Activated CD8-positive, alpha-beta T cell treated with anti-CD3 and anti-CD28 coated beads, Interleukin-2, amount 10 ng/mL, durations not matched to agents 7 days and 5 days (primary cell): ENCODE measurements at regions of chr2 and their contacts with region 1.

Region 1: GRCh38 chr2:63588385-63589147 is at the starts of genes MDH1 and WDPCP:
- DNase-seq: peak; percentile 96
- ATAC-seq: peak; percentile 91
- H3K4me3 Mint-ChIP-seq: peak within 1 kb of the TSS; percentile 98
- H3K27ac Mint-ChIP-seq: peak within 1 kb of the TSS; percentile 93
- H3K4me1 Mint-ChIP-seq: peaks cover 40% of the 10 kb centered on the region
- H3K27me3 Mint-ChIP-seq: no peaks in the 10 kb centered on the region
- total RNA-seq, gene MDH1: 179 to 197 TPM
- total RNA-seq, gene WDPCP: 7.6 to 8.8 TPM

Region 2: DNA sequence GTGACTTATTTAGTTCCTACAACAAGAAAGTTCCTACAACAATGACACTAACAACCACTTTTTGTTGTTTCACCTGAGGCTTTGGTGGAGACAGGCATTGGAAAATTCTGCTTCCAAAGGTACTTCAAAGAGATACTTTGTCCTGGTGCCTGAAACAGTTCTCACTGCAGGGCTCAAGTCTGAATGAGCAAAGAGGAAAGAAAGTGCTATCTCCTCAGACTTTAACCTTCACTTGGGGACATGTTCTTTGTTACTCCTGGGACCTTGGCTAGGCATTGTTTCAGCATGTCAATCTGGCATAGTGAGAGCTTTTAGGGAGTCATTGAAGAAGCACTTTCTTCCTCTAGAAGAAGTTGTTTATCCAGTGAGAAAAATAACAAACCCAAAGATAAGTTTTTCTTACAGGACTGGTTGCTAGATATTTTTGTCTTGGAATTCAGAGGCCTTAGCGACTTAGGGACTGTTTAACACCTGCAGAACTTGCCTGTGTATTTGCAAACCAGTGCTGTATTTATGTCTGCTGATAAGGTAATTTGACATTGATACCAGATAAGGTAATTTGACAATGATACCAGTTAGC is 12.4 kb after region 1 on chr2:
- CTCF ChIA-PET with region 1: interaction called, 6 read pairs
- POLR2A ChIA-PET with region 1: interaction called, 14 read pairs
- DNase-seq: no peak
- ATAC-seq: no peak
- H3K4me3 Mint-ChIP-seq: no peak overlapping the region
- H3K27ac Mint-ChIP-seq: no peak overlapping the region
- H3K4me1 Mint-ChIP-seq: peaks cover 2% of the 10 kb centered on the region
- H3K27me3 Mint-ChIP-seq: no peaks in the 10 kb centered on the region

Region 3: DNA sequence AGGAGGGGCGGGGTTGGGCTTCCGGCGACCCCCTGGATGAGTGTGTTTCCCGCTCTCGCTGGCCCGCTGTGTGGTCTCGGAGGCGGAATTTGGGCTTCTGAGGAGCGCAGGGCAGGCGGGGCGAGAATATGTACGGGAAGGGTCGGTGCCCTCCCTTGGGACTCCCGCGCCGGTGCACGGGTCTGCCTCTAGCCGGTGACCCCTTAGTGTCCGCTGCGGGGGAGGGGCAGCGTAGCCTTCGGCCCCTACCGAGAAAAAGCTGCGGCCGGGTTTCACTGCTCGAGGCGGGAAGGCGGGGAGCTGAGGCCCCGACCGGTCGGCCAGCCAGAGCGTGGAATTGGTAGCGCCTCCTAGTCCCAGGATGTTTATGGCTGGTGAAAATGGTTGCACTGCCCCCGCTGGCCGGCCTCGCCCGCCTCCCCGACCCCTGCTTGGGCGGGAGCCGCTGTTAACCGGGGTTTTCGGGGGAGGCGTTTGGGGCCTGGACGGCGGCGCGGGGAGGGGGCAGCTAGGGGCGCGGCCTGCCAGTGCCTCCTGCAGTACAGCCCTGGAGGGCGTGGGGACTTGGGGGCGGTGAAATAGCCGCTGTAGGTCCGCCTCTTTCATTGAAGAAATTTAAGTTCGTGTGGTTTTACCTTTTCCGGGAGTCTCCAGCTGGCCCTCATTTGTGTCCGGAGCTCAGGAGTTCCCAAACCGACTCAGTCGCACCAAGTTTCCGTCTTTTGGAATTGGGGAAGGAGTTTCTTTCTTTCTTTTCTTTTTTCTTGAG is 252.9 kb after region 1 on chr2 and contains the start of gene UGP2:
- CTCF ChIA-PET with region 1: no interaction called
- POLR2A ChIA-PET with region 1: interaction called, 37 read pairs
- DNase-seq: peak; percentile 94
- ATAC-seq: peak; percentile 76
- H3K4me3 Mint-ChIP-seq: peak within 1 kb of the TSS; percentile 98
- H3K27ac Mint-ChIP-seq: peak within 1 kb of the TSS; percentile 99
- H3K4me1 Mint-ChIP-seq: peaks cover 55% of the 10 kb centered on the region
- H3K27me3 Mint-ChIP-seq: peaks cover 2% of the 10 kb centered on the region
- total RNA-seq, gene UGP2: 161 to 164 TPM

Region 4: DNA sequence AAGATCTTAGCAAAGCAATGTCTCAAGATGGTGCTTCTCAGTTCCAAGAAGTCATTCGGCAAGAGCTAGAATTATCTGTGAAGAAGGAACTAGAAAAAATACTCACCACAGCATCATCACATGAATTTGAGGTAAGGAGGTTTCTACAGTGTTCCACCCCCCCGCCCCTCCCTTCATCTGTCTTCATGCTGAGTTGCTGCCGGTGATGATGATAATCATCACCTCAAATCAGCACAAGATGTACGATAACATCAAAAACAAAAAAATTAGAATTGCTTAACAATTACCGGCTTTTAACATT is 267.7 kb after region 1 on chr2:
- CTCF ChIA-PET with region 1: interaction called, 7 read pairs
- POLR2A ChIA-PET with region 1: interaction called, 17 read pairs
- DNase-seq: peak; percentile 79
- ATAC-seq: peak; percentile 89
- H3K4me3 Mint-ChIP-seq: peak overlapping the region; percentile 72
- H3K27ac Mint-ChIP-seq: peak overlapping the region; percentile 96
- H3K4me1 Mint-ChIP-seq: peaks cover 74% of the 10 kb centered on the region
- H3K27me3 Mint-ChIP-seq: no peaks in the 10 kb centered on the region